WTC11 (cell line): ENCODE measurements at regions of chr17 and their contacts with region 1.

Region 1: GRCh38 chr17:76567634-76568432 is 17.8 kb downstream of the ST6GALNAC2 start:
- DNase-seq: no peak
- ATAC-seq: peak; percentile 23
- H3K4me3 Mint-ChIP-seq: no peak overlapping the region
- H3K27ac Mint-ChIP-seq: peak overlapping the region; percentile 84
- H3K4me1 Mint-ChIP-seq: peaks cover 38% of the 10 kb centered on the region
- H3K27me3 Mint-ChIP-seq: no peaks in the 10 kb centered on the region
- CTCF ChIP-seq: no peak

Region 2: GRCh38 chr17:76585818-76586593 is 18.2 kb after region 1 on chr17 and contains the start of gene ST6GALNAC2:
- CTCF ChIA-PET with region 1: interaction called, 11 read pairs
- POLR2A ChIA-PET with region 1: interaction called, 3 read pairs
- DNase-seq: peak; percentile 37
- ATAC-seq: peak; percentile 33
- H3K4me3 Mint-ChIP-seq: peak within 1 kb of the TSS; percentile 71
- H3K27ac Mint-ChIP-seq: no peak within 1 kb of the TSS
- H3K4me1 Mint-ChIP-seq: peaks cover 18% of the 10 kb centered on the region
- H3K27me3 Mint-ChIP-seq: peaks cover 84% of the 10 kb centered on the region
- CTCF ChIP-seq: no peak
- total RNA-seq, gene ST6GALNAC2: 0.30 TPM in 1 of 3 replicates, not detected in the others

Region 3: GRCh38 chr17:76612977-76613851 is 45.4 kb after region 1 on chr17:
- CTCF ChIA-PET with region 1: interaction called, 10 read pairs
- POLR2A ChIA-PET with region 1: interaction called, 3 read pairs
- DNase-seq: peak; percentile 54
- ATAC-seq: peak; percentile 99
- H3K4me3 Mint-ChIP-seq: no peak overlapping the region
- H3K27ac Mint-ChIP-seq: peak overlapping the region; percentile 3; the same call in 1 of the 2 replicates
- H3K4me1 Mint-ChIP-seq: 0 out of 2 replicates have a peak, but pooled peaks cover 4% of the 10 kb centered on the region
- H3K27me3 Mint-ChIP-seq: peaks cover 21% of the 10 kb centered on the region
- CTCF ChIP-seq: no peak